IMR-90 (cell line): ENCODE measurements at regions of chr19 and their contacts with region 1.

Region 1: DNA sequence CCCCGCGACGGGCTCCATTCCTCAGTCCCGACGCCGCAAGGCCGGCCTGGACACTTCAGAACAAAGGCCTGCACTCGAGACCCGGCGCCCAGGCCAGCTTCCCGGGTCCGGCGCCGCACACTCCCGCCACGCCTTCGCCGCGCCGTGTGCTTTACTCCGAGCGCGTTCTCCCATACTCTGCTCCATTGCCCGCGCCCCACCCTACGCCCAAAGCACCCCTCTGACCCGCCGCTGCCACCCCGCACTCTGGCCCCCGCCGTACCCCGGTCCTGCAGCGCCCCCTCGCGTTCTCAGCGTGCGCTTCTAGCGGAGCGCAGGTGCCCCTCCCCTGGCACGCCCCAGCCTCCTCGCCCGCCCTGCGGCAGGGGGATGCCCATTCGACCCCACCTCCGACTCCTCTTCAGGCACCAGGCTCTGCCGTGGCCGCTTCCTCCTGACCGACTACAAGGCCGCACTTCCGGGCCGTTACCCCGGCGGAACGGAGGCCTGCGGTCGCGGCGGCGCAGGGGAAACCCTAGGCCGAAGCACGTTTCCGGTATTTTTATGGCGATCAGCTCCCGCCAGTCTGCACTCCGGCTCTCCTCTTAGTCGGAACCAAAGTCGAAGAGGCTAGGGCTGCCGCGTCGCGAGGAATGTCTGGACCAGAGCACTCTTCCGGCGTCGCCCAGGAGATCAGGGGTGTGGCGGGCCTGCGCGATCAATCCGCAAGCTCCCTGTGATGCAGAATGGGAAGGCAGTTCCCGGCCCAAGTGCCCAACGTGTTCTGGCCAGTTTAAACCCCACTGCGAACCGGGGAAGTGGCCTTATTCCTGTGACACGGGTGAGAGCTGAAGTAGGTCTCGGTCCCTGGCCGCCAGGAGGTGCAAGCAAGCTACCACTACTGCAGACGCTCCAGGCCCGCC is at the start of gene ZBTB45:
- DNase-seq: peak; percentile 96
- ATAC-seq: peak; percentile 84
- H3K4me3 ChIP-seq: peak within 1 kb of the TSS; percentile 69
- H3K27ac ChIP-seq: peak within 1 kb of the TSS; percentile 93
- H3K4me1 ChIP-seq: peaks cover 6% of the 10 kb centered on the region
- H3K27me3 ChIP-seq: no peaks in the 10 kb centered on the region
- CTCF ChIP-seq: peak; percentile 73
- POLR2A ChIP-seq: peak; percentile 66; the same call in 1 of the 2 replicates
- RAD21 ChIP-seq: peak; percentile 72
- total RNA-seq, gene ZBTB45: 1.4 TPM in 2 replicates

Region 2: GRCh38 chr19:58305065-58305931 is 214.3 kb before region 1 on chr19 and contains the start of gene ERVK3-1:
- CTCF ChIA-PET with region 1: no interaction called
- POLR2A ChIA-PET with region 1: no interaction called
- dilution Hi-C with region 1: no loop called
- in situ Hi-C with region 1: no loop called
- intact Hi-C with region 1: loop called (anchors 5 kb)
- DNase-seq: peak; percentile 98
- ATAC-seq: peak; percentile 99
- H3K4me3 ChIP-seq: peak within 1 kb of the TSS; percentile 72
- H3K27ac ChIP-seq: peak within 1 kb of the TSS; percentile 79
- H3K4me1 ChIP-seq: peaks cover 2% of the 10 kb centered on the region; the same call in 1 of the 2 replicates
- H3K27me3 ChIP-seq: no peaks in the 10 kb centered on the region
- CTCF ChIP-seq: no peak
- POLR2A ChIP-seq: peak; percentile 94
- RAD21 ChIP-seq: no peak; the same call in none of the 2 replicates
- total RNA-seq, gene ERVK3-1: 30.8 and 33.0 TPM in 2 replicates